ENCODE measurements at regions of chrX and their contacts with region 1.

Region 1: DNA sequence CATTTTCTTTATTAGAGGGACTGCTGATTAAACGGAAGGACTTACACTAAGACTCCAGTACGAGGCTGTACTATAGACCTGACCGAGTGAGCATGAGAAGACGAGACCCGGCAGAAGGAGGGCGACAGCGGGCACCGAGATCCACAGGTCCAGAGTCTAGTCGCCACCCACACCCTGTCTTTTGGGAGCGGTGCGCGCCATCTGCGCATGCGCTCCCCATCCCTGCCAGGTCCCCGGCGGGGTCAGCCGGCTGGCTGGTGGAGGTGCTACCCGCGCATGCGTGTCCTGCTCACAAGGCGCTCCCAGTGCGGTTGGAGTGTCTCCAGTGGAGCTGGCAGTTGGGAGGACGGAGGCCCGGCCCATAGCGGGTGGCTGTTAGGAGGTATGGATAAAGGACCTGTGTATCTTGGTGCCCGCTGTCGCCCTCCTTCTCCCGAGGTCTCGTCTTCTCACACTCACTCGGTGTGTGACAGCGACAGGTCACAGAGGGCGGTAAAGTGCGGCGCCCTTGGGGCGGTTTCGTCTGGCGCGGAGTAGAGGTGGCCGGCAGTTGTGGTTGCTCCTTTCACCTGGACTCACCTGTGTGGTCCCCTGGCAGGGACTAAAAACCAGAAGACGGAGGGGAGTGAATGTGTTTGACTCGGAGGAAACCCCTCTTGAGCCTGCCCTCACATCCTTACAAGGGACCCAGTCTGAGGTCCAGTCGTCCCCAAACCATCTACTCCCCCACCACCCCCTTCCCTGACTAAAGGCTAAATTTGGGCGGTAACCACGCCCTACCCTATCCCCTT is 7.6 kb upstream of the HSD17B10 start:
- DNase-seq: peak; percentile 79 to 91 (median 90)
- ATAC-seq: peak; percentile 91
- H3K4me3 ChIP-seq: no peak overlapping the region
- H3K4me1 ChIP-seq: no peaks in the 10 kb centered on the region
- CTCF ChIP-seq: no peak

Region 2: GRCh38 chrX:52933213-52933612 is 508.5 kb before region 1 on chrX:
- intact Hi-C with region 1: no loop called
- DNase-seq: no peak
- ATAC-seq: no peak
- H3K4me3 ChIP-seq: no peak overlapping the region
- H3K4me1 ChIP-seq: no peaks in the 10 kb centered on the region
- CTCF ChIP-seq: no peak

Region 3: GRCh38 chrX:53317365-53318069 is 124.2 kb before region 1 on chrX:
- intact Hi-C with region 1: loop called in 1 of 2 experiments (anchors 10 kb)
- DNase-seq: peak; percentile 65 to 78 (median 70)
- ATAC-seq: peak; percentile 74
- H3K4me3 ChIP-seq: no peak overlapping the region
- H3K4me1 ChIP-seq: peaks cover 2% of the 10 kb centered on the region
- CTCF ChIP-seq: peak; percentile 57

Region 4: DNA sequence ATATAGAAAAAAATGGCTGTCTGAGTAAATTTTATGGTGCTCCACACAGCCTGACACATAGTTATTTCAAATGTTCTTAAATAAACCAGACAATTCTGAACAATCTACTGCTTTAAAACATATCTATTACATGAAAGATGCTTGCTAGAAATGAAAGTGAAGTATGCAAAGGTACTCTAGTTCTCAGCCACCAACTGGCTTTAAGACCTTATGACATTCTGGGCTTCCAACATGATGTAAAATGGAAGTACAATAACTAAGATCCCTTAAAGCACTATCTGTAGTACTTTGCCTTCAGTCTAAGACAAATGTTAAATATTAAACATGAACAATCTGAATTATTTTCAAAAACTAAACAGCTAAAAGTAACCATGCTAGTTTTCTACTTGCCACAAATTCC is 227.5 kb after region 1 on chrX:
- intact Hi-C with region 1: no loop called
- DNase-seq: no peak
- ATAC-seq: no peak
- H3K4me3 ChIP-seq: no peak overlapping the region
- H3K4me1 ChIP-seq: peaks cover 7% of the 10 kb centered on the region
- CTCF ChIP-seq: no peak